GM12878 (cell line): ENCODE measurements at regions of chr12 and their contacts with region 1.

Region 1: DNA sequence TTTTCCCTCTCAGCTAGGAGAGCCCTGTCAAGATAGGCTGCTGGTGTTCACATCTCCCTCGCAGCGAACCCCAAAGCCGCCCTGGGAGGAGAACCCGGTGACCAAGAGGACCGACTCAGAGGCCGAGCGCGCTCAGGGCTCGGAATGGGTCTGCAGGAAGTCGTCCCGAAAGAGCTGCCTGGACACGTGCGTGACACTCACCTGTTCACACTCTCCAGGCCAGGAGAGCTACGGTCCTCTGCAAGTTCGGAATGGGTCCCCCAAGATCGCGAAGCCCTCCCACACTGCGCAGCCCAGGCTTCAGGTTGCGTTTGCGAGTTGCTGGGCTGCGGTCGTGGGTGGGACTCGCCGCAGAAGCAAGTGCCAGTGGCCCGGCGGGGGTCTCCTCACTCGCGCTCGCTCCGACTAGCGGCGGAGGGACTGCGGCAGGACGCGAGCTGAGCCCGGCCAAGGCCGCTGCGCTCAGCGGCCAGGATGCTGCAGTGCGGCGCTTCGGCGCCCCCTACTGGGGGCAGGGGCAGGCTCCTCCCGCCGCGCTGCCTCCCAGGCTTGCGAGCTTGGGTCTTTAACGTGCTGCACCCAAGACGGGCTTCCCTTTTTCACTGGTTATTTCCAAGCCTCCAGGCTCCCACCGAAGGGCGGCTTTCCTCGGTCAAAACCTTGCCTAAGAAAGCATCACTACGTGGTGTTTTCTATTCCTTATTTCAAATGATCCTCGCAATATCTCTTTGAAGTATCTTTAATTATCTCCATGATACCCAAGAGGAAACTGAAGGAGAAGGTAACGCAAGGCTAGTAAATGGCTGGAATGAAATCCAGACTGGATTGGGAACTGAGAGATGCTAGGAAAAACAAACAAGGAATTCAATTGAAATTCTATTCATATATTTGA is at the start of gene RERG:
- DNase-seq: peak; percentile 5
- ATAC-seq: peak; percentile 100
- H3K4me3 ChIP-seq: no peak within 1 kb of the TSS
- H3K27ac ChIP-seq: no peak within 1 kb of the TSS
- H3K4me1 ChIP-seq: no peaks in the 10 kb centered on the region
- H3K27me3 ChIP-seq: peaks cover 3% of the 10 kb centered on the region in 2 experiments; a peak in 3 of 4 replicates
- CTCF ChIP-seq: peak; percentile 84 to 92 (median 91); a peak in 5 of 6 replicates
- EP300 ChIP-seq: no peak
- POLR2A ChIP-seq: no peak
- RAD21 ChIP-seq: peak; percentile 65
- polyA plus RNA-seq, gene RERG: 0.05 to 0.11 TPM

Region 2: DNA sequence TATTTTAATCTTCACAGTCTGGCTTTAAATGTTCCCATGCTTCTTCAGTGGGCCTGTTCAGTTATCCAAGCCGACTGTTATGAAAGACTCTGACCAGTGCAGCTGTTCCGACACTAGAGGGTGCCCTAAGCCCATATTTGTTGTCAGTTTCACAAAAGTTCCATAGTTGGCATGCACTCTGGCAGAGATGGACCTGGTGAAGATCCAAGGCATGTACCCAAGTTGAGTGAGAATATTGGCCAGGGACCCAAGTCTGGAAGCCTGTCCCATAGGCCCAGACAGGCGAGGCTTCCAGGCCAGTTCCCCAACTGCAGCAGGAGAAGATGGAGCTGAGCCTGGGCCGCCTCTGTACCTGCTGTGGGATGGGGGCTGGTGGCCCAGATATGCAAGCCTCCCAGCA is 497.5 kb before region 1 on chr12:
- CTCF ChIA-PET with region 1: interaction called, 13 read pairs
- POLR2A ChIA-PET with region 1: no interaction called
- RAD21 ChIA-PET with region 1: interaction called, 3 read pairs
- SMC1A ChIA-PET with region 1: no interaction called
- in situ Hi-C with region 1: loop called (anchors 10 kb)
- intact Hi-C with region 1: loop called (anchors 5 kb)
- DNase-seq: peak; percentile 37
- ATAC-seq: peak; percentile 88
- H3K4me3 ChIP-seq: no peak overlapping the region
- H3K27ac ChIP-seq: no peak overlapping the region
- H3K4me1 ChIP-seq: no peaks in the 10 kb centered on the region
- H3K27me3 ChIP-seq: no peaks in the 10 kb centered on the region
- CTCF ChIP-seq: peak; percentile 72 to 79 (median 74)
- EP300 ChIP-seq: no peak
- POLR2A ChIP-seq: no peak
- RAD21 ChIP-seq: peak; percentile 79

Region 3: DNA sequence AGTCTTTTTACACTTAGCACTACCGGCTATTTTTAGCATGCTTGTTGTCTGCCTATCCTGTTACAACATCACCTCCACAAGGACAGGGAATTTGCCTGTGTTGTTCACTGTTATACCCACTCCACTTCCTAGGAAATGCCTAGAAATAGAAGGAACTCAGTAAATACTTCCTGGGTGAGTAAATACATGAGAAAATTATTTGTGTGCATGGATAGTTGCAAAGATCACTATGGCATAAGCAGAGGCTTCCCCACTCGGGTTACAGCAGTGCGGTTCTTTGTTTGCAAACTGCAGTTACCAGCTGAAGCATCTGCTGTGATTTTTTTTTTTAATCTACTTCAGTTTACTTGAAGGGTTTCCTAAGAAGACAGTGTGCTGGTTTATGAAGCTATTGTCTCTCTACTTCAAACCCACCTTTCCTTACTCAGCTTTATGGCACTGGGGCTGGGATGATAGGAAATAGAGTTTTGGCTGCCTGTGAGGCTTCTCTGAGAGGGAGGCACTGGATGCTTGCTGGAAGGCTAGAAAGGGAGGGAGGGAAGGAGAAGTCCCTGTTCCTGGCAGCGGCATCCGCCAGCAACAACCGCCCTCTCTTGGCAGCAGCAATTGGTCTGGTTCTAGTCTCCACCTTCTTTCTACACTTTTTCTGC is 219.4 kb before region 1 on chr12:
- CTCF ChIA-PET with region 1: interaction called, 5 read pairs
- POLR2A ChIA-PET with region 1: no interaction called
- RAD21 ChIA-PET with region 1: no interaction called
- SMC1A ChIA-PET with region 1: no interaction called
- in situ Hi-C with region 1: no loop called
- intact Hi-C with region 1: loop called (anchors 5 kb)
- DNase-seq: no peak
- ATAC-seq: no peak
- H3K4me3 ChIP-seq: no peak overlapping the region
- H3K27ac ChIP-seq: no peak overlapping the region
- H3K4me1 ChIP-seq: no peaks in the 10 kb centered on the region
- H3K27me3 ChIP-seq: peaks cover 0 to 2% of the 10 kb centered on the region in 2 experiments; a peak in 1 of 4 replicates
- CTCF ChIP-seq: no peak
- EP300 ChIP-seq: no peak
- POLR2A ChIP-seq: no peak
- RAD21 ChIP-seq: no peak

Region 4: GRCh38 chr12:15088105-15088504 is 133.1 kb before region 1 on chr12:
- CTCF ChIA-PET with region 1: no interaction called
- POLR2A ChIA-PET with region 1: no interaction called
- RAD21 ChIA-PET with region 1: no interaction called
- SMC1A ChIA-PET with region 1: no interaction called
- in situ Hi-C with region 1: no loop called
- intact Hi-C with region 1: no loop called
- DNase-seq: no peak
- ATAC-seq: peak; percentile 48
- H3K4me3 ChIP-seq: no peak overlapping the region
- H3K27ac ChIP-seq: no peak overlapping the region
- H3K4me1 ChIP-seq: no peaks in the 10 kb centered on the region
- H3K27me3 ChIP-seq: no peaks in the 10 kb centered on the region
- CTCF ChIP-seq: no peak
- EP300 ChIP-seq: no peak
- POLR2A ChIP-seq: no peak
- RAD21 ChIP-seq: no peak

Region 5: DNA sequence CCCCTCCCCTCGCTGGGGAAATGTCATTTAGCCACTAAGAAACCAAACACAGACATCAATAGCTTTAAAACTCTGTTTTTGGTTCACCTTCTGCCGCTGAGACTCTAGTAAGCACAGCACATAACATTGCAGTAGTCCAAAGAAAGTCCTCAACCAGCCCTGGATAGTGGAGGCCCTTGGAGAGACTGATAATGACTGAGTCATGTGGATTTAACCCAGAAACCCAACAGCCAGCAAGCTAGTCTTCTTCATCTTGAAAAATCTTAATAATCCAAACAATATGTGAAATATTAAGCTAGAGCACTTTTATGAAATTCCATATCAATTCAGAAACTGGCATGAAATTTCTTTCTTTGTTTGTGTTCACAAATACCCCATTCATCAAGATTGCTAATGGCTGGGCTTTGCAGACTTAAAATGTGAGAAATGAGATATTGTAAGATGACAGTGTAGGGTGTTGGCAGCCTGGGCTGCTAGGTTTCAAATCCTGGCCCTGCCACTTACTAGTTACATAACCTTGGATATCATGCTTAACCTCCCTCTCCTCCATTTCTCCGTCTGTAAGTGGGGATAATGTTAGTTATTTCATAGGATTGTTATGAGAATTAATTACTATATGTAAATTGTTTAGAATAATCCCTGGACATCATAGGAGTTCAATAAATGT is 40.1 kb before region 1 on chr12:
- CTCF ChIA-PET with region 1: interaction called, 20 read pairs
- POLR2A ChIA-PET with region 1: no interaction called
- RAD21 ChIA-PET with region 1: interaction called, 3 read pairs
- SMC1A ChIA-PET with region 1: no interaction called
- in situ Hi-C with region 1: no loop called
- intact Hi-C with region 1: no loop called
- DNase-seq: no peak
- ATAC-seq: no peak
- H3K4me3 ChIP-seq: no peak overlapping the region
- H3K27ac ChIP-seq: no peak overlapping the region
- H3K4me1 ChIP-seq: no peaks in the 10 kb centered on the region
- H3K27me3 ChIP-seq: 0 out of 4 replicates have a peak, but pooled peaks cover 0 to 5% of the 10 kb centered on the region in 2 experiments
- CTCF ChIP-seq: no peak
- EP300 ChIP-seq: no peak
- POLR2A ChIP-seq: no peak
- RAD21 ChIP-seq: no peak

Region 6: GRCh38 chr12:15522565-15523187 is 301.4 kb after region 1 on chr12:
- CTCF ChIA-PET with region 1: interaction called, 7 read pairs
- POLR2A ChIA-PET with region 1: no interaction called
- RAD21 ChIA-PET with region 1: no interaction called
- SMC1A ChIA-PET with region 1: interaction called, 4 read pairs
- in situ Hi-C with region 1: no loop called
- intact Hi-C with region 1: loop called (anchors 2 kb)
- DNase-seq: no peak
- ATAC-seq: peak; percentile 29; the same call in 2 of the 3 replicates
- H3K4me3 ChIP-seq: no peak overlapping the region
- H3K27ac ChIP-seq: no peak overlapping the region
- H3K4me1 ChIP-seq: no peaks in the 10 kb centered on the region
- H3K27me3 ChIP-seq: no peaks in the 10 kb centered on the region
- CTCF ChIP-seq: peak; percentile 38 to 74 (median 52); a peak in 5 of 6 replicates
- EP300 ChIP-seq: no peak
- POLR2A ChIP-seq: no peak
- RAD21 ChIP-seq: peak; percentile 82